Posterior vena cava (tissue), 2 donors: ENCODE measurements at regions of chr1 and their contacts with region 1.

Region 1: GRCh38 chr1:7070389-7071029 is 285.3 kb downstream of the CAMTA1 start:
- DNase-seq: peak; percentile 88

Region 2: DNA sequence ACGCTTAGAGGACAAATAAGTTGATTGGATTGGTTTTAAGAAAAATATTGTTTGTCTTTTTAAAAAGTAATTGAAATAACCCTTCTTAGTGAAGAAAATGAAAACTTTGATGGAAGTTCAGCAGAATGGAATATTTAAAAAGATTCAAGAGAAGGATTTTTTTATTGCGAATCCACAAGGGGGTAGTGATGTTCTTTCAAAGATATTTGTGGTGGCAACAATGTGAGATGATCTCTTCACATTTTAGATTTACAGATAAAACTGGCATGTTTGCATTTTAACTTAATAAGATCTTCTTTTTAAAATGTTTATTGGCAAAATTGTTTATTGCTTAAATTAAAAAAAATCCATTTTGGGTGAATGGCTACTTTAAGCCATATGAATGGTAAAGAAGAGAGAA is 276.3 kb before region 1 on chr1:
- intact Hi-C with region 1: loop called (anchors 10 kb)
- DNase-seq: no peak

Region 3: DNA sequence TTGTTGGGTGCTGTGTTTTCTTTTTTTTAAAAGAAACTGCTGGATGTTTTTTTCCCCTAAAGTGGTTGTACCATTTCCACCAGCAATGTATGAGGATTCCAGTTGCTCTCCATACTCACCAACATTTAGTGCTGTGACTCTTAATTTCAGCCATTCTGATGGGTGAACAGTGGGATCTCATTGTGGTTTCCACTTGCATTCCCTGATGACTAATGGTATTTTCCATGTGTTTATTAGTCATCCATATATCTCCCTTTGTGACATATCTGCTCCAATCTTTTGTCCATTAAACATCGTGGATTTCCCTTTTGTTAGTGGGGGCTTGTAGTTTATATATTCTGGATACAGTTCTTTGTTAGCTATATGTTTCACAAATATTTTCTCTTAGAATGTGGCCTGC is 79.2 kb before region 1 on chr1:
- intact Hi-C with region 1: no loop called
- DNase-seq: no peak